MCF 10A (cell line): ENCODE measurements at regions of chr1 and their contacts with region 1.

Region 1: GRCh38 chr1:17125756-17126237 is 6.5 kb upstream of the PADI2 start:
- DNase-seq: peak; percentile 84
- H3K4me3 Mint-ChIP-seq: no peak overlapping the region
- H3K27ac Mint-ChIP-seq: peak overlapping the region; percentile 59
- H3K4me1 Mint-ChIP-seq: peaks cover 8% of the 10 kb centered on the region
- H3K27me3 Mint-ChIP-seq: no peaks in the 10 kb centered on the region
- CTCF ChIP-seq: peak; percentile 96

Region 2: DNA sequence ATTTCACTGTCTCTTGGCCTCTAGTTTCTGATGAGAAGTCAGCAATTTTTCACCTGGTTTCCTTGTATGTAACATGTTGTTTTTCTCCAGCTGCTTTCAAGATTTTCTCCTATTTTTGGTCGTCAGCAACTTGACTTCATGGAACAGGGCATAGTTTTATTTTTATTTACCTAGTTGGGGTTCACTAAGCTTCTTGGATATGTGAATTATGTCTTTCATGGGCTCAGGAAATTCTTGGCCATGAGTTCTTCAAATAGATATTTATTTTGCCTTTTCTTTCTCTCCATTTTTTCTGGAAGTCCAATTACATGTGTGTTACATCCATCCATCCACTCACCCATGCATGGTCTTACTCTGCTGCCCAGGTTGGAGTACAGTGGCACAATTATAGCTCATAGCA is 85.7 kb before region 1 on chr1:
- CTCF ChIA-PET with region 1: no interaction called
- POLR2A ChIA-PET with region 1: no interaction called
- intact Hi-C with region 1: no loop called
- DNase-seq: no peak
- H3K4me3 Mint-ChIP-seq: no peak overlapping the region
- H3K27ac Mint-ChIP-seq: no peak overlapping the region
- H3K4me1 Mint-ChIP-seq: peaks cover 3% of the 10 kb centered on the region
- H3K27me3 Mint-ChIP-seq: no peaks in the 10 kb centered on the region
- CTCF ChIP-seq: no peak

Region 3: GRCh38 chr1:17136936-17137335 is 11.1 kb after region 1 on chr1:
- CTCF ChIA-PET with region 1: interaction called, 11 read pairs
- POLR2A ChIA-PET with region 1: no interaction called
- intact Hi-C with region 1: no loop called
- DNase-seq: peak; percentile 16
- H3K4me3 Mint-ChIP-seq: no peak overlapping the region
- H3K27ac Mint-ChIP-seq: no peak overlapping the region
- H3K4me1 Mint-ChIP-seq: peaks cover 9% of the 10 kb centered on the region
- H3K27me3 Mint-ChIP-seq: no peaks in the 10 kb centered on the region
- CTCF ChIP-seq: no peak

Region 4: DNA sequence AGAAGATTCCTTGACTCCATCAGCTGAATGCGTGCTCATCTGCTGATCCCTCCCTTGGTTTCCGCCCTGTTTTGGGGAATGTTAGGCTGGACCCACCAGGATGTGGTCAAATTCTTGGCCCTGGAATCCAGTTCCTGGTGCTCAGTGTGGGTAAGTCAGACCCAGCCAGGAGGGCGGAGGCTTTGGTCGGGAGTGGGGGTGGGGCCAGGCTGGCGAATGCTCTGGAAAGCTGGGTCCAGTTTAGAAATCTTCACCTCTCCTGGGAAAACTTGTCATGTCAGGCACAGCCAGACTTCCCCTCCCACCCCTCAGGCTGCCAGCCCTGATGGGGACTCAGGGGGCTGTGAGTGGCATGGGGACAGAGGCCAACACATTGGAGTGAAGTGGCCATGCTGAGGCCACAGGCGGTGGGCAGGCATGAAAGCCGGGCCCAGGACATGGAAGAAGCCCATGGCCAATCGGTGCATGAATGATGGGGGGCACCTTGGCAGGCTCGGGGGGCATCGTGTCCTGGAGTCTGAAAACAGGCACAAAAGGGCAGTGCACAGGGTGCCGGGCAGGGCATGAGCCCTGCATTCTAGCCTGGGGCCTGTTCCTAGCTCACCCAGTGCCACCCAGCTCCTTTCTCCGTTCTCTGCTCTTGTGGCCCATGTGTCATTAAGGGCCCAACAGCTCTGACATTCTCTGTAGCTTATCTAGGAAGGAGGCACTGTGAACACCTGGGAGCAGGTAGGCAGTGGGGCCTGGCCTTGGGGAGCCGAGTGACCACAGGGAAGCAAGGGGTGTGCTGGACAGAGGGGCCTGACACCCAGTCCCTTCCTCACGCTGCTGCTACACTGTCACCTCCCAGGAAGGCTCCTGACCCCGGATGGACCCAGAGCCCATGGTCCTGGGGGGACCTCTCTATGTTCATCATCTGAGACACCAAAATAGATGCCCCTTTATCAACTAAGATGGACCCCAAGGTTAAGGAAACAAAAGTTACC is 64.5 kb after region 1 on chr1:
- CTCF ChIA-PET with region 1: no interaction called
- POLR2A ChIA-PET with region 1: no interaction called
- intact Hi-C with region 1: loop called (anchors 5 kb)
- DNase-seq: peak; percentile 93
- H3K4me3 Mint-ChIP-seq: peak overlapping the region; percentile 25
- H3K27ac Mint-ChIP-seq: peak overlapping the region; percentile 92
- H3K4me1 Mint-ChIP-seq: peaks cover 61% of the 10 kb centered on the region
- H3K27me3 Mint-ChIP-seq: no peaks in the 10 kb centered on the region
- CTCF ChIP-seq: no peak

Region 5: GRCh38 chr1:17274186-17275170 is 148.7 kb after region 1 on chr1:
- CTCF ChIA-PET with region 1: interaction called, 5 read pairs
- POLR2A ChIA-PET with region 1: interaction called, 3 read pairs
- intact Hi-C with region 1: loop called (anchors 10 kb)
- DNase-seq: peak; percentile 61
- H3K4me3 Mint-ChIP-seq: no peak overlapping the region
- H3K27ac Mint-ChIP-seq: no peak overlapping the region
- H3K4me1 Mint-ChIP-seq: peaks cover 4% of the 10 kb centered on the region
- H3K27me3 Mint-ChIP-seq: no peaks in the 10 kb centered on the region
- CTCF ChIP-seq: peak; percentile 82

Region 6: DNA sequence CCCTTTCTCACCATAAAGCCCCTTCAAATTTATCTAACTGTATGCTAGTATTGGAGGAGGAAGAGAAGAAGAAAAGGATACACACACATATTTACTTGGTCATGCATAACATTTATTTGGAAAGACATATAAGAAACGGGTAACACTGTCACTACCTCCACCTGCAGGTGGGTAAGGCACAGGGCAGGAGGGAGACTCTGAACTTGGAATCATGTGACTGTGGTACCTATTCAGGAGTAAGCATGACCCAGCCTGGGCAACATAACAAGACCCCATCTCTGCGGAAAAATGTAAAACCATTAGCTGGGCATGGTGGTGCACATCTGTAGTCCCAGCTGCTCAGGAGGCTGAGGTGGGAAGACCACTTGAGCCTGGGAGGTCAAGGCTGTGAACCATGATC is 244.8 kb after region 1 on chr1:
- CTCF ChIA-PET with region 1: interaction called, 17 read pairs
- POLR2A ChIA-PET with region 1: interaction called, 6 read pairs
- intact Hi-C with region 1: loop called (anchors 1 kb)
- DNase-seq: peak; percentile 56
- H3K4me3 Mint-ChIP-seq: no peak overlapping the region
- H3K27ac Mint-ChIP-seq: no peak overlapping the region
- H3K4me1 Mint-ChIP-seq: peaks cover 16% of the 10 kb centered on the region
- H3K27me3 Mint-ChIP-seq: no peaks in the 10 kb centered on the region
- CTCF ChIP-seq: peak; percentile 49